ENCODE measurements at regions of chr12 and their contacts with region 1.

Region 1: GRCh38 chr12:20950248-20950647 is 139.7 kb downstream of the SLCO1B3 start:
- DNase-seq: peak; percentile 18
- ATAC-seq: peak; percentile 83
- H3K4me3 ChIP-seq: no peak overlapping the region
- H3K27ac ChIP-seq: no peak overlapping the region
- H3K4me1 ChIP-seq: no peaks in the 10 kb centered on the region
- H3K27me3 ChIP-seq: no peaks in the 10 kb centered on the region
- CTCF ChIP-seq: peak; percentile 28 to 72 (median 50); a peak in 5 of 6 replicates
- POLR2A ChIP-seq: no peak
- RAD21 ChIP-seq: peak; percentile 49; the same call in 1 of the 2 replicates

Region 2: GRCh38 chr12:20917269-20917668 is 33.0 kb before region 1 on chr12:
- CTCF ChIA-PET with region 1: no interaction called
- POLR2A ChIA-PET with region 1: no interaction called
- RAD21 ChIA-PET with region 1: no interaction called
- intact Hi-C with region 1: no loop called
- DNase-seq: no peak
- ATAC-seq: no peak
- H3K4me3 ChIP-seq: no peak overlapping the region
- H3K27ac ChIP-seq: no peak overlapping the region
- H3K4me1 ChIP-seq: no peaks in the 10 kb centered on the region
- H3K27me3 ChIP-seq: no peaks in the 10 kb centered on the region
- CTCF ChIP-seq: no peak
- POLR2A ChIP-seq: no peak
- RAD21 ChIP-seq: no peak

Region 3: GRCh38 chr12:20963762-20964161 is 13.5 kb after region 1 on chr12:
- CTCF ChIA-PET with region 1: no interaction called
- POLR2A ChIA-PET with region 1: no interaction called
- RAD21 ChIA-PET with region 1: no interaction called
- intact Hi-C with region 1: no loop called
- DNase-seq: no peak
- ATAC-seq: no peak
- H3K4me3 ChIP-seq: no peak overlapping the region
- H3K27ac ChIP-seq: no peak overlapping the region
- H3K4me1 ChIP-seq: no peaks in the 10 kb centered on the region
- H3K27me3 ChIP-seq: no peaks in the 10 kb centered on the region
- CTCF ChIP-seq: no peak
- POLR2A ChIP-seq: no peak
- RAD21 ChIP-seq: no peak

Region 4: GRCh38 chr12:21065845-21066244 is 115.6 kb after region 1 on chr12:
- CTCF ChIA-PET with region 1: interaction called, 17 read pairs
- POLR2A ChIA-PET with region 1: no interaction called
- RAD21 ChIA-PET with region 1: no interaction called
- intact Hi-C with region 1: loop called (anchors 5 kb)
- DNase-seq: peak; percentile 18
- ATAC-seq: peak; percentile 76
- H3K4me3 ChIP-seq: no peak overlapping the region
- H3K27ac ChIP-seq: no peak overlapping the region
- H3K4me1 ChIP-seq: no peaks in the 10 kb centered on the region
- H3K27me3 ChIP-seq: no peaks in the 10 kb centered on the region
- CTCF ChIP-seq: peak; percentile 54 to 62 (median 59); a peak in 5 of 6 replicates
- POLR2A ChIP-seq: no peak
- RAD21 ChIP-seq: peak; percentile 67

Region 5: DNA sequence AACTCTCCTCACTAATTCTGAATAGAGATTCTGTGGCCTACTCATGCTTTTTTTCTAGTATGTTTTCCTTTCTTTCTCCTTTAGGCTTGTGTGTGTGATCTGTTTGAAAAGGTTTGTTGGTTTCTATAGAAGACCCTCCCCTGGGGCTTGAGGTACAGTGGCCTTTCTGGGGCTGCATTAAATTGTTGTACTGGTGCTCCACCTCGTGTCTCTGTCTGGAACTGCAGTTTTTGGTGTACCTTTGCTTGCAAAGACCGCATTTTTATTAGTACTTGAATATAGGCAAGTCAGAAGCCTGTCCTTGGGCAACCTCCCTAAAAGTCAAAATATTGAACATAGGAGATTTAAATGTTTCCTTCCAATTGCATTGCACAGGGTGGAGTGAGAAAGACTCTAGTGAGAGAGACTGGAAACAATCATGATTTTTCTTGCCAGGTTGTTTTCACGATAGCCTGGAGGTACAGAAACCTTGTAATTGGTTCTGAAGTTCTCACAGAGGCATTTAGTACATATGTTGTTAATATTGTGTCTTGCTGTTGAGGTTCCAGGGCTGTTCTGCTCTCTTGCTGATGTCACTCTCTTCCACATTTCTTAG is 219.7 kb after region 1 on chr12:
- CTCF ChIA-PET with region 1: interaction called, 3 read pairs
- POLR2A ChIA-PET with region 1: no interaction called
- RAD21 ChIA-PET with region 1: no interaction called
- intact Hi-C with region 1: loop called (anchors 2 kb)
- DNase-seq: peak; percentile 37
- ATAC-seq: peak; percentile 74
- H3K4me3 ChIP-seq: no peak overlapping the region
- H3K27ac ChIP-seq: no peak overlapping the region
- H3K4me1 ChIP-seq: no peaks in the 10 kb centered on the region
- H3K27me3 ChIP-seq: no peaks in the 10 kb centered on the region
- CTCF ChIP-seq: peak; percentile 73 to 94 (median 74)
- POLR2A ChIP-seq: no peak
- RAD21 ChIP-seq: peak; percentile 83